Posterior vena cava (tissue), 2 donors: ENCODE measurements at regions of chr3 and their contacts with region 1.

Region 1: GRCh38 chr3:41169023-41169422 is 30.3 kb upstream of the CTNNB1 start:
- DNase-seq: no peak

Region 2: GRCh38 chr3:41118461-41119390 is 50.3 kb before region 1 on chr3:
- intact Hi-C with region 1: loop called in 1 of 2 experiments (anchors 2 kb)
- DNase-seq: no peak